SK-N-SH (cell line): ENCODE measurements at regions of chr18 and their contacts with region 1.

Region 1: DNA sequence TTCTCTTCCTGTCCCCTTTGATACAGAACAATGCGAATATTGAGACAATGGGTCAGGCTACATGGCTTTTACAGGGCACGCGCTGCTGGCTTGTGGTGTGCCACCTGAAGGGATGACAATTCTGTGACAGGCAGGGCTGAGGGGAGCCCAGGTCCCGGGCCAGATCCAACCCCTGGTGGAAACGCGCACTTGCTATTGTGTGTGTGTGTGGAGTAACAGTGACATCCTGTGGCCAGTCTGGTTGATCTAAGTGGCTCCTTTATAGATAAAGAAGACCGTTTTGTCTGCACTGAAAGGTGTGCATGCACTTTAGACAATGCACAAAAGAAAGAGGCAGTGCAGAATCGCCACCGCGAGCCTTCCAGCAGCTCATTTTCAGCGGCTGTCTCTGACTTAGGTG is 273.6 kb downstream of the HRH4 start:
- DNase-seq: peak; percentile 28
- H3K4me3 ChIP-seq: no peak overlapping the region
- H3K27ac ChIP-seq: no peak overlapping the region
- H3K4me1 ChIP-seq: no peaks in the 10 kb centered on the region
- H3K27me3 ChIP-seq: peaks cover 3% of the 10 kb centered on the region; the same call in 1 of the 2 replicates
- CTCF ChIP-seq: no peak
- EP300 ChIP-seq: no peak
- RAD21 ChIP-seq: peak; percentile 60

Region 2: DNA sequence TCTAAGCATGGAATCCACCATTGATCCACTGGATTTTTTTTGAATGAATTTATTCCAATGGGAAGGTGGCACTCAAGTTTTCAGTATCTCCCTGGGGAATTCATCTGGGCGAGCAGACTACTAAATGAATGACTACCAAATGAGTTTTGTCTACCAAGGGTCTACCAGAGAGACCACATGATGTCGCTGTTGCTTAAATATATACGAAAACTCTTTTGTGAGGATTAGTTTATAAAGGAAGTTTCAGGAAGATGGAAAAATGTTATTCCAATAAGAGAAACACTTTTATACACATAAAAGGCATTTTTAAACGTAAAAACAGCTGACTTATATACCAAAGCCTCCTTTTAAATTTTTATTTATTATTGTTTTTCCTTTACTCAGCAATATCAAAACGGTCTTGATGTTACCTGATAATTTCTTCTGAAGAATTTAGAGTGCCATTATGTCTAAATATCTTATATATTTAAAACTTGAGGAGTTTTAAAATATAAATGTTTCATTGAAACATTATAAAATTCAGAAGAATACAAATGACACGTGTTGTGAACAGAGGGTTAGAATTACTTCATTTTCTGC is 133.9 kb before region 1 on chr18:
- CTCF ChIA-PET with region 1: interaction called, 18 read pairs
- POLR2A ChIA-PET with region 1: no interaction called
- DNase-seq: peak; percentile 56
- H3K4me3 ChIP-seq: no peak overlapping the region
- H3K27ac ChIP-seq: no peak overlapping the region
- H3K4me1 ChIP-seq: no peaks in the 10 kb centered on the region
- H3K27me3 ChIP-seq: no peaks in the 10 kb centered on the region
- CTCF ChIP-seq: peak; percentile 75
- EP300 ChIP-seq: no peak
- RAD21 ChIP-seq: peak; percentile 84